Lower lobe of right lung (tissue), 2 donors: ENCODE measurements at regions of chr6 and their contacts with region 1.

Region 1: DNA sequence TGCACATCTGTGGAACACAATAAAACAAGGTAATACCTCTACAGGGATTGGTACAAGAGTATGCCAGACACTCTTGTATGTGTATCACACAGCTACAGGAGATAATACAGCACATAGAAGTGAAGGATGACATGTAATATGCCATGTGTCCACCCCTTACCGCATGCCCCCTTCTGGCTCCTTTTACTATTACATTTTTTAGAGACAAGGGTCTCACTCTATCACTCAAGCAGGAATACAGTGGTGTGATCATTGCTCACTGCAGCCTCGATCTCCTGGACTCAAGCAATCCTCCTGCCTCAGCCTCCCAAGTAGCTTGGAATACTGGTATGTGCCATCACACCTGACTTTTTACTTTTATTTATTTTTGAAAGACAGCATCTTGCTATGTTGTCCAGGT is 4.2 kb upstream of the NCR3 start:
- DNase-seq: no peak
- ATAC-seq: peak; percentile 67 to 71
- H3K4me3 ChIP-seq: no peak overlapping the region
- H3K27ac ChIP-seq: no peak overlapping the region
- H3K4me1 ChIP-seq: no peaks in the 10 kb centered on the region
- H3K27me3 ChIP-seq: no peaks in the 10 kb centered on the region
- CTCF ChIP-seq: peak; percentile 44

Region 2: GRCh38 chr6:31541658-31542521 is 55.1 kb before region 1 on chr6 and contains the start of gene DDX39B:
- intact Hi-C with region 1: loop called (anchors 10 kb)
- DNase-seq: peak; percentile 96
- ATAC-seq: peak; percentile 96
- H3K4me3 ChIP-seq: peak within 1 kb of the TSS; percentile 85
- H3K27ac ChIP-seq: peak within 1 kb of the TSS; percentile 90
- H3K4me1 ChIP-seq: peaks cover 39% of the 10 kb centered on the region
- H3K27me3 ChIP-seq: no peaks in the 10 kb centered on the region
- CTCF ChIP-seq: no peak
- total RNA-seq, gene DDX39B: 265 TPM